ENCODE measurements at regions of chr4 and their contacts with region 1.

Region 1: DNA sequence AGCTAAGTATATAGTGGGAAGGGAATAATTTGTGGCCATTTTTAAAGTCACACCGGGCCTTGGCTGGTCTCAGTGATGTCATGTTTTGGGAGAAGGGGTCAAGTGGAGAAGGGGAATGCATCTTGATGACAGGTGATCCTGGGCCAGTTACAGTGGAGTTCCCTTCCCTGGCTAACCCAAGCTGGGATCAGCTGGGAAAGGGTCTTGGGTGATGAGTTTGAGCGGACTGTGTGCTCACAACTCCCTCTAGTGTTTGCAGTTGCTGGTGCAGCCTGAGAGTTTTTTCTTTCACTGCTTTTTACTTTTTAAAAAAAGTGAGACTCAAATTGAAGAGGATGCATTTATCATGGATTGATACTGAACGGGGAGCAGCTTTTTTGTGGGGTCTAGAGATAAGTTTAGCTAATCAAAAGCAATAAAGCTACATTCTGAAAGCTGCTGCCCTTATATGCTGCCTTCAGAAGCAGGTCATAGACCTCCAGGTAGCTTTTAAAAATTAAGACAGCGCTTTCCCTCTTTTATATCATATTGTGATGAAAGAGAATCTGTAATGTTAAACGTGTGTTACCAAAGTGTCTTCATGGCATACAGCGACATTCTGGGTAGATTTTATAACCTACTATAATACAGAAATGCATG is 164.7 kb downstream of the DCLK2 start:
- DNase-seq: peak; percentile 27
- ATAC-seq: no peak
- H3K4me3 Mint-ChIP-seq: no peak overlapping the region
- H3K27ac Mint-ChIP-seq: no peak overlapping the region
- H3K4me1 Mint-ChIP-seq: no peaks in the 10 kb centered on the region
- H3K27me3 Mint-ChIP-seq: no peaks in the 10 kb centered on the region
- CTCF ChIP-seq: peak; percentile 89

Region 2: DNA sequence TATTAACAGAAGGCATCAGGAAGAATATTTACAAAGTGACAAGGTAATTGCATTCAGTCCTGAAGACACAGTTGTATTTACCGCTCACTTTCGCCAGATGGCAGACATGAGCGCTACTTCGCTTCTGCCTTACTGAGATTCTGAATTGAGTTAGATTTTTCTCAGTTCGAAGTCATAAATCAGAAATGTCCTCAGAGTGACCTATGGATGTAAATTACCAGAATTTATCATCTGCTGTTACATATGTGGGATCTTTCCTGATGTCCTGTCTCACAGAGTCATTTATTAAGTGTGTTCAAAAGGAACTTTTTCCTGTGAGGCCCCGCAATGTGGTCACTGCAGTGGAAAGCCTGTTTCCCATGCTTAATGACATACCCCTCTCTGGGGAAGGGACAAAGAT is 262.0 kb before region 1 on chr4:
- CTCF ChIA-PET with region 1: interaction called, 23 read pairs
- POLR2A ChIA-PET with region 1: no interaction called
- intact Hi-C with region 1: loop called (anchors 5 kb)
- DNase-seq: peak; percentile 61
- ATAC-seq: peak; percentile 79
- H3K4me3 Mint-ChIP-seq: no peak overlapping the region
- H3K27ac Mint-ChIP-seq: no peak overlapping the region
- H3K4me1 Mint-ChIP-seq: peaks cover 4% of the 10 kb centered on the region
- H3K27me3 Mint-ChIP-seq: no peaks in the 10 kb centered on the region
- CTCF ChIP-seq: peak; percentile 78

Region 3: DNA sequence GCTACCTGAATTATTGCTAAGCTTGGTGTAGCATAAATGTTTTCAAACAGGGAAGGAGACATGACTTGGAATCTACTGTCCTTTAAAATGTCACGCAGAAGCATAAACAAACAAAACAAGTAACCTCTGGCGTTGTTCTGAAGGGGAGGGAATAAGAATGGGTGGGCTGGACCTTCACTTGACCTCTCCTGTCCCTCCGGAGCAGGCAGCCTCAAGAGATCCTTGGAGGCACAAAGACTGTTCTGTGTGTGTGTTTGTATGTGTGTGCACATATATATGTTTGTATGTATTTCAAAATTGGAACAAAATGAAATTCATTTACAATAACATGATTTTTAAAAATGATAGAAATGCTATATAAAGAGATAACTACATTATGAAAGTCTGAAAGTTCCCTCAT is 256.0 kb before region 1 on chr4:
- CTCF ChIA-PET with region 1: interaction called, 23 read pairs
- POLR2A ChIA-PET with region 1: no interaction called
- intact Hi-C with region 1: loop called (anchors 5 kb)
- DNase-seq: no peak
- ATAC-seq: no peak
- H3K4me3 Mint-ChIP-seq: no peak overlapping the region
- H3K27ac Mint-ChIP-seq: no peak overlapping the region
- H3K4me1 Mint-ChIP-seq: peaks cover 12% of the 10 kb centered on the region
- H3K27me3 Mint-ChIP-seq: no peaks in the 10 kb centered on the region
- CTCF ChIP-seq: no peak

Region 4: GRCh38 chr4:150010525-150011126 is 232.3 kb before region 1 on chr4:
- CTCF ChIA-PET with region 1: interaction called, 14 read pairs
- POLR2A ChIA-PET with region 1: no interaction called
- intact Hi-C with region 1: no loop called
- DNase-seq: peak; percentile 18
- ATAC-seq: no peak
- H3K4me3 Mint-ChIP-seq: no peak overlapping the region
- H3K27ac Mint-ChIP-seq: no peak overlapping the region
- H3K4me1 Mint-ChIP-seq: no peaks in the 10 kb centered on the region
- H3K27me3 Mint-ChIP-seq: peaks cover 10% of the 10 kb centered on the region
- CTCF ChIP-seq: peak; percentile 42

Region 5: DNA sequence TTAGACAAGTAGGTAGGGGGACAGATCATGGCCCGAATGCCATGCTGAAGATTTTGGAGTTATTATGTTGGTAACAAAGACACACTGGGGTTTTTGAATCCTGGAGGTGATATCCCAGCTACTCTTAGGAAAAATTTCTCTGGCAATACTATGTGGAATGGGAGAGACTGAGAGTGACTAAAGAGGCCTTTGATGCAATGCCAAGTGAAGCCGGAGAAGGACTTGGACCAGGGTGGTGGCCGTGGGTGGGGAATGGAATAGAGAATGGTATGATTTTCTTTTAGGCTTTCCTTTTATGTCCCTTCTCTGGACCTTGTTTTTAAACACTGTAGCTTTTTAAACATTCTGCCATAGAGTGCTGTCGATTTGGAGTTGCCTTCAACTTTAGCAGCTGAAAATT is 23.1 kb before region 1 on chr4:
- CTCF ChIA-PET with region 1: interaction called, 10 read pairs
- POLR2A ChIA-PET with region 1: no interaction called
- intact Hi-C with region 1: no loop called
- DNase-seq: no peak
- ATAC-seq: no peak
- H3K4me3 Mint-ChIP-seq: no peak overlapping the region
- H3K27ac Mint-ChIP-seq: no peak overlapping the region
- H3K4me1 Mint-ChIP-seq: no peaks in the 10 kb centered on the region
- H3K27me3 Mint-ChIP-seq: peaks cover 1% of the 10 kb centered on the region
- CTCF ChIP-seq: no peak

Region 6: DNA sequence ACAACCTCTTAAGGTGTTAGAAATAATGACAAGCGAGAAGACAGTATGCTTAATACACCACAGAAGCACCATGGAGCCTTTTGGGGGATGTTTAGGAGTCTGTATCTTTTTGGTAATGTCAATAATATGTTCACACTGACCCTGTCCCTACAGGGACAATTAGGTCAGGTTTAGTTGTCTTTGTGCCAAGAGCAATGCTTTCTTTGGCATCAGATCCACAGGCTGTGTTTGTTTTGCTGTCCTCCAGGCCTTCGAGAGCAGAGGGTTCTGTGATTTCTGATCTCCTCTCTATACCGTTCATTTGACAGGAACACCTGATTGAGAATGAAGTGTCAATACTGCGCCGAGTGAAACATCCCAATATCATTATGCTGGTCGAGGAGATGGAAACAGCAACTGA is 10.9 kb before region 1 on chr4:
- CTCF ChIA-PET with region 1: interaction called, 10 read pairs
- POLR2A ChIA-PET with region 1: interaction called, 3 read pairs
- intact Hi-C with region 1: no loop called
- DNase-seq: no peak
- ATAC-seq: no peak
- H3K4me3 Mint-ChIP-seq: no peak overlapping the region
- H3K27ac Mint-ChIP-seq: no peak overlapping the region
- H3K4me1 Mint-ChIP-seq: no peaks in the 10 kb centered on the region
- H3K27me3 Mint-ChIP-seq: peaks cover 4% of the 10 kb centered on the region
- CTCF ChIP-seq: no peak

Region 7: DNA sequence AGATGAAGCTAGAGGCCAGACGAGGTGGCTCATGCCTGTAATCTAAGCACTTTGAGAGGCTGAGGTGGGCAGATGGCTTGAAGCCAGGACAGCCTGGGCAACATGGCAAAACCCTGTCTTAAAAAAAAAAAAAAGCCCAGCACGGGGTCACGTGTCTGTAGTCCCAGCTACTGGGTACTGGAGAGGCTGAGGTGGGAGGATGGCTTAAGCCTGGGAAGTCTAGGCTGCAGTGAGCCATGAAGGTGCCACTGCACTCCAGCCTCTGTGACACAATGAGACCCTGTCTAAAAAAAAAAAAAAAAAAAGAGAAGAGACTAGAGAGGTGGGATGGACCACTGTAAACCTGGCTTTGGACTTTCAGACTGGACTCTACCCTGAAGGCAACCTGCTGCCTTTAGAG is 782.8 kb after region 1 on chr4:
- CTCF ChIA-PET with region 1: no interaction called
- POLR2A ChIA-PET with region 1: no interaction called
- intact Hi-C with region 1: no loop called
- DNase-seq: no peak
- ATAC-seq: no peak
- H3K4me3 Mint-ChIP-seq: no peak overlapping the region
- H3K27ac Mint-ChIP-seq: no peak overlapping the region
- H3K4me1 Mint-ChIP-seq: peaks cover 11% of the 10 kb centered on the region
- H3K27me3 Mint-ChIP-seq: no peaks in the 10 kb centered on the region
- CTCF ChIP-seq: no peak

Measured in activated CD8-positive, alpha-beta T cell treated with anti-CD3 and anti-CD28 coated beads for 36 hours (primary cell).